ENCODE measurements at regions of chr7 and their contacts with region 1.

Region 1: DNA sequence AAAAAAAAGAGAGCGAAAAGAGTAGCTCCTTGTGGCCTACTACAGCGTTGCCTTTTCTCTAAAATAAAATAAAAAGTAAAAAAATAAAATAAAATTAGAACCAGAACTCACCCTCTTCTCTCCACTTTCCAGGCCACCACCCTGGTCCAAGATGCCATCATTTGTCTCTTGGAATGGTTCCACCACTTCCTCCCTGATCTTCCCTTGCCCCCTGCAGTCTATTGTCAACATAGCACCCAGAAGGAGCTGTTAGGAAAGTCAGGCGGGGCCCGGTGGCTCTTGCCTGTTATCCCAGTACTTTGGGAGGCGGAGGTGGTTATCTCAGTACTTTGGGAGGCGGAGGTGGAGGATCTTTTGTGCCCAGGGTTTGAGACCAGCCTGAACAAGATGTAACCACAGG is 7.6 kb upstream of the GRID2IP start:
- DNase-seq: peak; percentile 62
- CTCF ChIP-seq: peak; percentile 58

Region 2: DNA sequence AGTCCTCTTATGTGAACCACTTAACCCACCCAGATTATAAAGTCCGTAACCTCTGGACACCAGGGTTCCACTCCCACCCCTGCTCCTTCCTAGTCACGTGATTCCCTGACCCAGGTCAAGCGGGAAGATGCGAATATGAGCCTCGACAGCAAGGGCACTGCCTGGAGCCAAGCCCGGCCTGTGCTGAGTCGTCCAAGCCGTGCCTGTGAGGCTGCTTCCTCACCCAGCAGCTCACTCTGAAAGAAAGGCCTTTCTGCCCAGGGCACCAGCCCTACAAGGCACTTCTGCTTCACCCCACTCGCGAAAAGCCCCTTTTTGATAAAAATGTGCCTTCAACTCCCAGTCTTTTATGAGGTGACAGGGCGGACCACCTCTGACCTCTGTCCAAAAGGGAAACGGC is 372.2 kb before region 1 on chr7:
- CTCF ChIA-PET with region 1: no interaction called
- POLR2A ChIA-PET with region 1: no interaction called
- DNase-seq: no peak
- CTCF ChIP-seq: no peak

Region 3: DNA sequence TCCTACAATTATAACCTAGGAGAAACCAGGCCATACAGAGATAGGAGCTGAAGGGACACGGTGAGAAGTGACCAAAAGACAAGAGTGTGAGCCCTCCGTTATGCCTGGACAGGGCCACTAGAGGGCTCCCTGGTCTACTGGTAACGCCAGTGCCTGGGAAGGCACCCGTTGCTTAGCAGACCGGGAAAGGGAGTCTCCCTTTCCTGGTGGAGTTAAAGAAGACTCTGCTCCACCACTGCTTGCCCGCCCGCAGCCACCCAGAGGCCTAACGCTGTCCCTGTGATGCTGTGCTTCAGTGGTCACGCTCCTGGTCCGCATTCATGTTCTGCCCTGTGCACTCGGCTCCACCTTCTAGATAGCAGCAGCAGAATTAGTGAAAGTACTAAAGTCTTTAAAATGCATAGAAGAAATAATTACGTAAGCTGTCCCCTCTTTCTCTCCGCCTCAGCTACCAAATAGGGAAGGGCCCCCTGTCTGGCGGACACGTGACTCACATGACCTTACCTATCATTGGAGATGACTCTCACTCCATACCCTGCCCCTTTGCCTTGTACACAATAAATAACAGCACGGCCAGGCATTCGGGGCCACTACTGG is 42.4 kb before region 1 on chr7:
- CTCF ChIA-PET with region 1: interaction called, 38 read pairs
- POLR2A ChIA-PET with region 1: no interaction called
- DNase-seq: no peak
- CTCF ChIP-seq: peak; percentile 89

Region 4: DNA sequence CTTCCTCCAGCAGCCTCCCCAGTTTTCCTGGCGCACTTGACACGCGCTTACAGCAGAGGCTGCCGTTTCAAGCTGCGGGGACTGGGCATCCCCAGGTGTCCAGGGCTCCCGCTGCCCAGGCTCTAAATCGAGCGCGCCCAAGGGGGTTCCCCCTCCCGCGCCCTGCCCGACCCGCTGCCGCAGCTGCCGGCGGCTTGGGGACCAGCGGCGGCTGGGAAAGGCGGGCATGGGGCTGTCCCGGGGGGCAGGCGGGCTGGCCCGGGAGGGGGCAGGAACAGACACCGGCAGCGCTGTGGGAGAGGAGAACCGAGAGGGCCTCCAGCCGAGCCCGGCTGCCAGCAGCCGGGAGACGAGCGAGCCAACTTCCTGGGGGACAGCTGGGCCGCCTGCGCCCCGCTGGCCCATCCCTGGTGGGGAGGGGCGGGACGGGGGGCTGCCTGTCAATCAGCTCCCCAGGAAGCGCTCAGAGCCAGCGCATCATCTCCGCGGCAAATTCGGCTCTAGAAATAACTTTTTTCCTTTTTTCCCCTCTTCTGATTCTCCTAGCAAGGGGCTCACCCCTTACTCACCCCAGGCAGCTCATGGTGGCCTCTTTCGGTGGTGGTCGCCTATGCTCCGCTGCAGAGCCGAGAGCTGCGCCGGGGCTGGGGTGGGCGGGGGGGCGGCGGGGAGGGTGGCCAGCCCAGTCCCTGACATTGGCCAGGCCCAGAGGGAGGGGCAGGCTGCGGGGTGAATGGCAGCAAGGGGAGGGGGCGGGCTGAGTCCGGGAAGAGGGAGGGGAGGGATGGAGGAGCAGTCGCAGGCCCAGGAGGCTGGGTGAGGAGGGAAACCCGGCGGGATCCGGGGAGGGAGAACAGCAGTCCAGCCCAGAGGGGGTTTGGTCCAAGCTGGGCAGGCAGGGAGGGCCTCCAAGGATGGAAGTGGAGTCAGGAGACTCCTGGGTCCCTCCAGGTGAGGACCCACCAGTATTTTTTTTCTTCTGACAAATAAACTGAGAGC is 22.3 kb before region 1 on chr7:
- CTCF ChIA-PET with region 1: interaction called, 13 read pairs
- POLR2A ChIA-PET with region 1: no interaction called
- DNase-seq: peak; percentile 56
- CTCF ChIP-seq: no peak

Region 5: GRCh38 chr7:6546498-6547251 is 12.2 kb before region 1 on chr7:
- CTCF ChIA-PET with region 1: interaction called, 19 read pairs
- POLR2A ChIA-PET with region 1: no interaction called
- DNase-seq: no peak
- CTCF ChIP-seq: no peak

Region 6: GRCh38 chr7:6571160-6571779 is 12.4 kb after region 1 on chr7:
- CTCF ChIA-PET with region 1: interaction called, 20 read pairs
- POLR2A ChIA-PET with region 1: no interaction called
- DNase-seq: no peak
- CTCF ChIP-seq: no peak

Region 7: GRCh38 chr7:6577365-6578113 is 18.7 kb after region 1 on chr7 and contains the start of gene ZDHHC4:
- CTCF ChIA-PET with region 1: interaction called, 20 read pairs
- POLR2A ChIA-PET with region 1: no interaction called
- DNase-seq: peak; percentile 99
- CTCF ChIP-seq: peak; percentile 3

Measured in GM10248 (cell line).